Activated T-helper 2 cell treated with anti-CD3 and anti-CD28 coated beads, Interferon-gamma antibody, Interleukin-2, Interleukin-4, amounts not matched to agents 10 μg/mL and 5 μg/mL and 100 μg/mL, durations not matched to agents 14 hours and 24 hours and 36 hours (primary cell): ENCODE measurements at regions of chr10 and their contacts with region 1.

Region 1: GRCh38 chr10:17228091-17228940 is at the start of gene VIM:
- DNase-seq: peak; percentile 82
- H3K4me3 Mint-ChIP-seq: peak within 1 kb of the TSS; percentile 89
- H3K27ac Mint-ChIP-seq: peak within 1 kb of the TSS; percentile 98
- H3K4me1 Mint-ChIP-seq: peaks cover 51% of the 10 kb centered on the region
- H3K27me3 Mint-ChIP-seq: peaks cover 3% of the 10 kb centered on the region
- total RNA-seq, gene VIM: 337 and 342 TPM in 2 replicates

Region 2: GRCh38 chr10:15802375-15802949 is 1425.9 kb before region 1 on chr10:
- intact Hi-C with region 1: loop called (anchors 2 kb)
- DNase-seq: no peak
- H3K4me3 Mint-ChIP-seq: no peak overlapping the region
- H3K27ac Mint-ChIP-seq: peak overlapping the region; percentile 69
- H3K4me1 Mint-ChIP-seq: peaks cover 14% of the 10 kb centered on the region
- H3K27me3 Mint-ChIP-seq: no peaks in the 10 kb centered on the region

Region 3: GRCh38 chr10:16686054-16686902 is 542.0 kb before region 1 on chr10:
- intact Hi-C with region 1: no loop called
- DNase-seq: no peak
- H3K4me3 Mint-ChIP-seq: no peak overlapping the region
- H3K27ac Mint-ChIP-seq: no peak overlapping the region
- H3K4me1 Mint-ChIP-seq: no peaks in the 10 kb centered on the region
- H3K27me3 Mint-ChIP-seq: no peaks in the 10 kb centered on the region

Region 4: DNA sequence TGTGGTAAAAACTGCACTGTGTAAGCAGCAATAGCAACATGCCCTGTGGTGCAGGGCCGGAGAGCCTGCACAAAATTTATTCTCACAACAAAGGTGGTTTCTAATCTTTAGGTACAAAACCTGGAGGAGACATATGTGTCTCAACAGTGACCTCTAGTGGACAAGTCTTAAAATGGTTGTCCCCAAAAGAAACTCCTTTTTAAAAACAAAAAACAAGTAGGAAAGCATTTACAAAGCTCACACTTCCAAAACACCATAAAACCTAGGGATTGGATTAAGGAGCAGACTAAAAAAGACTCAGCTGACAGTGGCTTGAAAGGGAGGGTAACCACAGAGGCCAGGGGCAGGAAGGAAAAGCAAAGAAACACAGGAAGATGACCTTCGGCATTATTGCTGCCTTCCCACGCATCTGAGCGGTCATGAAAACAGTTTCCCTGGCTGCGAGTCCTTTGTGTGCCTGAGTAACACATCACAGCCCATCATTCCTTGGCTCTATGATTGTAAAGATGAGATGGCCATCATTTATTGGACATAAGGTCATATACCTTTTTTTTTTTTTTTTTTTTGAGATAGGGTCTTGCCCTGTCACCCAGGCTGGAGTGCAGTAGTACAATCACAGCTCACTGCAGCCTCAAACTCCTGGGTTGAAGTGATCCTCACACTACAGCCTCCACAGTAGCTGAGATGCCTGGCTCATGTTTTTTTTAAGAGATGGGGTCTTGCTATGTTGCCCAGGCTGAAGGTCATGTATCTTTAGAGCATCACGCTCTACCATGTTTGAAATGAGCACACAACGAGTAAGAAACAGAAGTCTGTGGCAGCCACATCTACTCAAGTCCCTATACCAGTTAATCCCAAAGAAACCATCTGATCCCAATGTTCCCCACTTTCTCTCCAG is 450.6 kb before region 1 on chr10:
- intact Hi-C with region 1: loop called (anchors 5 kb)
- DNase-seq: no peak
- H3K4me3 Mint-ChIP-seq: no peak overlapping the region
- H3K27ac Mint-ChIP-seq: peak overlapping the region; percentile 59
- H3K4me1 Mint-ChIP-seq: peaks cover 22% of the 10 kb centered on the region
- H3K27me3 Mint-ChIP-seq: no peaks in the 10 kb centered on the region

Region 5: GRCh38 chr10:17001961-17002749 is 226.2 kb before region 1 on chr10:
- intact Hi-C with region 1: loop called (anchors 1 kb)
- DNase-seq: no peak
- H3K4me3 Mint-ChIP-seq: peak overlapping the region; percentile 46
- H3K27ac Mint-ChIP-seq: peak overlapping the region; percentile 99
- H3K4me1 Mint-ChIP-seq: peaks cover 33% of the 10 kb centered on the region
- H3K27me3 Mint-ChIP-seq: peaks cover 69% of the 10 kb centered on the region

Region 6: DNA sequence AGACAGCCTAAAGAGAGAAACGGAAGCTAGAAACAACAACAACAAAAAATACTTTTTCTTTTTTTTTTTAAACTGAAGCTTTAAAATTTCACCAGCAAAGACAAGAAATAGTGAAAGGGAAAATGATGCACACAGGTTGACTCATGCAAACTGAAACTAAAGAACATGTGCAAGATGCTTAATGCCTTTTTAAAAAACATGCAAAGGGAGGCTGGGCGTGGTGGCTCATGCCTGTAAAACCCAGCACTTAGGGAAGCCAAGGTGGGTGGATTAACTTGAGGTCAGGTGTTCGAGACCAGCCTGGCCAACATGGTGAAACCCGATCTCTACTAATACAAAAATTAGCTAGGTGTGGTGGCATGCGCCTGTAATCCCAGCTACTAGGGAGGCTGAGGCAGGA is 83.6 kb before region 1 on chr10:
- intact Hi-C with region 1: loop called (anchors 2 kb)
- DNase-seq: peak; percentile 50
- H3K4me3 Mint-ChIP-seq: no peak overlapping the region
- H3K27ac Mint-ChIP-seq: peak overlapping the region; percentile 50
- H3K4me1 Mint-ChIP-seq: peaks cover 37% of the 10 kb centered on the region
- H3K27me3 Mint-ChIP-seq: peaks cover 1% of the 10 kb centered on the region

Region 7: DNA sequence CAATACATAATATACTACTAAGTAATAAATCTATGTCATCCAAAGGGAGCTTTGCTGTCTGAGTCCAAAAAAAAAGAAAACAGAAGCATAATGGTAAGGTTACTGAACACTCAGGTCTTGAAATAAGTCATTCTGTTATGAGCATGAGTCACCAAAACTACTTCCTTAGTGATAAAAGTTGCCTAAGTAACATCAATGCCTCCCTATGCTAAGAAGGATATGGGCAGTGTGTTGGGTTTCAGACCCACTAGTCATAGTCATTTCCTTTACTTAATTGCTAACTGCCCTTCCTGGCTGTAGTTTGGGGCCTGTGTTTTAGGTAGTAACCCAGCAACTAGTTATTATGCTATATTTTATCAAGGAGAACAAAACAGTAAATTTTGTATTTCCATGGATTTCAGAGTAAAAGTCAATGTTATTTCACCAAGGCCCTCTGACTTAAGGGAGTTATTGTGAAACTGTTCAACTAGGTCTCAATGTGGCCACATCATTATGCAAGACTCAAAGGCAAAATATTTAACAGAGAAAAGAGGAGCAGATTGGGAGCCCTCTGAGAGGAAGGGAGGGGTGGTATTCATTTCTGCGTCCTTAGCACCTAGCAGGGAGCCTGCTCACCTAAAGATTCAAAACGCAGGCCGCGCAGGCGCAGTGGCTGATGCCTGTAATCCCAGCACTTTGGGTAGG is 12.0 kb before region 1 on chr10:
- intact Hi-C with region 1: loop called (anchors 1 kb)
- DNase-seq: peak; percentile 43
- H3K4me3 Mint-ChIP-seq: no peak overlapping the region
- H3K27ac Mint-ChIP-seq: peak overlapping the region; percentile 94
- H3K4me1 Mint-ChIP-seq: peaks cover 43% of the 10 kb centered on the region
- H3K27me3 Mint-ChIP-seq: no peaks in the 10 kb centered on the region

Region 8: DNA sequence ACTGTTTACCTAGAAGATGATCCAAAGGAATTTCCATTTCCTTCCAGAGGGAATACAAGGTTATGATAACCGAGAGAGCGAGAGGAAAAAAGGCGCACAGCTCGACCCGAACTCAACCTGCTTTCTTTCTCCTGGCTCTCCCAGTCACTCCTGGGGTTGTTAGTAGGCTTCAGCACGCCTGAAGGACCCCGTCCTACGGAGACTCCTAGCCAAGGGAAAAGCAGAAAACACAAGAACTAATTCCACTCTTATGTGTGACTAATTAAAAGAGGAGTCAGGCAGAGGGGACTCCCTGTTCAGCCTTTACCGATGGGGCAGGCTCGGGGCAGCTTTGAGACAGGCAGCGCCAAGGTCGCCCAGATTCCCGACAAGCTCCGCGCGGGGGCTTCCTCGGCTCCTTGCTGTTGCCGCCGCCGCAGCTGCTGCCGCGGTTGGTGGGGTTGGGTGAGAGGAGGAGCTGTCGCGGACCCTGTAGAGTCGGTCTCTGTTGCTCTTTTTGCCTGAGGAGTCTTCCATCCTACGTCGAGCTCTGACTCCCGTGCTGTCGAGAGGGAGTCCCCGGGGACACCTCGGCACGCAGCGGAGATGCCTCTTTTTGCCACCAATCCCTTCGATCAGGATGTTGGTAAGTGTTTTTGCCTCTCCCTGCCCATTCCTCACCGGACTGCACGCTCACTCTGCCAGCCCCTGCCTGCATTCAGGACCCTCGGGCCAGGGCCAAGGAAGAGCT is 415.6 kb after region 1 on chr10 and contains the start of gene STAM:
- intact Hi-C with region 1: loop called (anchors 5 kb)
- DNase-seq: peak; percentile 87
- H3K4me3 Mint-ChIP-seq: peak within 1 kb of the TSS; percentile 98
- H3K27ac Mint-ChIP-seq: peak within 1 kb of the TSS; percentile 99
- H3K4me1 Mint-ChIP-seq: peaks cover 44% of the 10 kb centered on the region
- H3K27me3 Mint-ChIP-seq: no peaks in the 10 kb centered on the region
- total RNA-seq, gene STAM: 33.8 and 35.2 TPM in 2 replicates